HepG2 (cell line): ENCODE measurements at regions of chr1 and their contacts with region 1.

Region 1: GRCh38 chr1:37602750-37603694 is 7.3 kb upstream of the GNL2 start:
- DNase-seq: peak; percentile 59
- ATAC-seq: peak; percentile 85
- H3K4me3 ChIP-seq: no peak overlapping the region
- H3K27ac ChIP-seq: no peak overlapping the region
- H3K4me1 ChIP-seq: peaks cover 7% of the 10 kb centered on the region; the same call in 1 of the 2 replicates
- H3K27me3 ChIP-seq: peaks cover 11 to 70% of the 10 kb centered on the region in 2 experiments; a peak in 4 of 5 replicates
- CTCF ChIP-seq: peak; percentile 64
- EP300 ChIP-seq: no peak
- POLR2A ChIP-seq: no peak
- RAD21 ChIP-seq: peak; percentile 40

Region 2: DNA sequence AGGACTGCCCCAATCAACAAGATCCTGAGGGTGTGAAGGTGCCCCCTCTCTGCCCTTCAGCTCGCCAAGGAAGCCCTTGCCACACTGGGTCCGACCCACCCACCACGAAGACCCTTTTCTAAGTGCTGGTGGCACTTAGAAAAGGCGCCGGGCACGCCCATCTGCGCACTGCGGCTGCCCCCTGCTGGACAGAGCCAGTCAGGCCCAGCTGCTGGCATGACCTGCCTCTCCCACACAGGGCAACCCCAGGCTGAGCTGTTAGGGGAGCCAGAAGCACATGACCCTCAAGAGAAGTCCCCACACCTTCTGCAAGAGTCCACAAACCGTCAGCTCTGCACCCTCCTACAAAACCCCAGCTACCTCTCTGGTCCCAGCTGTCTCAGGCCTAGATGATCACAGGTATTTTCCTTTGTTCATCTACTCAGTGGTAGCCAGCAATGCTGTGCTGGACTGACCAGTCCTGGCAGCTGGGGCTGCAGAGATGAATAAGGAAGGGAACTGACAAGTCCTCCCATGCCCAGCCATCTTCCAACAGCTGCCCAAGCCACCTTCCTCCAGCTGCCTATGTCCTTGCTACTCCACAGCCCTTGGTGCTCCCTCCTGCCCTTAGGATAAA is 168.6 kb before region 1 on chr1:
- CTCF ChIA-PET with region 1: no interaction called
- POLR2A ChIA-PET with region 1: no interaction called
- in situ Hi-C with region 1: no loop called
- intact Hi-C with region 1: no loop called
- DNase-seq: peak; percentile 25
- ATAC-seq: peak; percentile 92
- H3K4me3 ChIP-seq: no peak overlapping the region
- H3K27ac ChIP-seq: no peak overlapping the region
- H3K4me1 ChIP-seq: no peaks in the 10 kb centered on the region
- H3K27me3 ChIP-seq: peaks cover 5 to 66% of the 10 kb centered on the region in 2 experiments; a peak in 4 of 5 replicates
- CTCF ChIP-seq: peak; percentile 94
- EP300 ChIP-seq: no peak
- POLR2A ChIP-seq: no peak
- RAD21 ChIP-seq: peak; percentile 86

Region 3: GRCh38 chr1:37620707-37621106 is 17.7 kb after region 1 on chr1:
- CTCF ChIA-PET with region 1: no interaction called
- POLR2A ChIA-PET with region 1: no interaction called
- in situ Hi-C with region 1: no loop called
- intact Hi-C with region 1: no loop called
- DNase-seq: no peak
- ATAC-seq: no peak
- H3K4me3 ChIP-seq: no peak overlapping the region
- H3K27ac ChIP-seq: no peak overlapping the region
- H3K4me1 ChIP-seq: no peaks in the 10 kb centered on the region
- H3K27me3 ChIP-seq: peaks cover 6 to 65% of the 10 kb centered on the region in 2 experiments; a peak in 4 of 5 replicates
- CTCF ChIP-seq: no peak
- EP300 ChIP-seq: no peak
- POLR2A ChIP-seq: no peak
- RAD21 ChIP-seq: no peak

Region 4: GRCh38 chr1:37676281-37677243 is 73.5 kb after region 1 on chr1:
- CTCF ChIA-PET with region 1: interaction called, 56 read pairs
- POLR2A ChIA-PET with region 1: no interaction called
- in situ Hi-C with region 1: loop called (anchors 5 kb)
- intact Hi-C with region 1: no loop called
- DNase-seq: no peak
- ATAC-seq: no peak
- H3K4me3 ChIP-seq: no peak overlapping the region
- H3K27ac ChIP-seq: no peak overlapping the region
- H3K4me1 ChIP-seq: peaks cover 8% of the 10 kb centered on the region
- H3K27me3 ChIP-seq: peaks cover 3 to 48% of the 10 kb centered on the region in 2 experiments; a peak in 3 of 5 replicates
- CTCF ChIP-seq: peak; percentile 17
- EP300 ChIP-seq: no peak
- POLR2A ChIP-seq: no peak
- RAD21 ChIP-seq: no peak

Region 5: DNA sequence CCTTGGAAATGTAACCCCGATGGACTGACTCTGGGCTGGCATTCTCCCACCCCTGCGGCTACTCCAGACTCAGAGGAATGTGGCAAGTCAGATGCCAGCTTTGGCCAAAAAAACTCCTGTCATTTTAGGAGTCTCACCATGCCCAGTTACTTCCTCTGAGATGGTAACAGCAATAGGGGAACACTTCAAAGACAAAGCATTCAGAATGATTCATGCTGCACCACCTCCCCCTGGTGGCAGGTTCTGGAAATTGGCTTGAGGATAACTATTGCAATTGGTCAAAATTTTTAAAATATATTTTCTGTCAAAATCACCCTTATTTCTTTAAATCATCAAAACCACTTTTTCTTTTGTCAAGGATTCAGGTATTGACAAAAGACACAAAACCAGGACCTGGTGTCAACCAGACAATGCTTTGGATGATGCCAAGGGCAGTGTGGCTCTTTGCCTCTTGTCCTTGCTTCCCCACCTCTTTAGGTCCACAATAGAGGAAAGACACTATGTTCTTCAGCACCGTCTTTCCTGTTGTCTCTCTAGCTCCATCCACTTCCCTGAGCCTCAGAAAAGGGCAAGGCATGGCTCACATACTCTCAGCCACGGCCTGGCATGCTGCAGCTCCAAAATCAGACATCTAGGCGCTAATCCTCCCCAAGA is 79.4 kb after region 1 on chr1:
- CTCF ChIA-PET with region 1: interaction called, 56 read pairs
- POLR2A ChIA-PET with region 1: no interaction called
- in situ Hi-C with region 1: loop called (anchors 5 kb)
- intact Hi-C with region 1: loop called (anchors 1 kb)
- DNase-seq: peak; percentile 38
- ATAC-seq: peak; percentile 64
- H3K4me3 ChIP-seq: no peak overlapping the region
- H3K27ac ChIP-seq: no peak overlapping the region
- H3K4me1 ChIP-seq: no peaks in the 10 kb centered on the region
- H3K27me3 ChIP-seq: peaks cover 0 to 2% of the 10 kb centered on the region in 2 experiments; a peak in 1 of 5 replicates
- CTCF ChIP-seq: peak; percentile 81
- EP300 ChIP-seq: no peak
- POLR2A ChIP-seq: no peak
- RAD21 ChIP-seq: peak; percentile 82; the same call in 1 of the 2 replicates